IMR-90 (cell line): ENCODE measurements at regions of chr9 and their contacts with region 1.

Region 1: DNA sequence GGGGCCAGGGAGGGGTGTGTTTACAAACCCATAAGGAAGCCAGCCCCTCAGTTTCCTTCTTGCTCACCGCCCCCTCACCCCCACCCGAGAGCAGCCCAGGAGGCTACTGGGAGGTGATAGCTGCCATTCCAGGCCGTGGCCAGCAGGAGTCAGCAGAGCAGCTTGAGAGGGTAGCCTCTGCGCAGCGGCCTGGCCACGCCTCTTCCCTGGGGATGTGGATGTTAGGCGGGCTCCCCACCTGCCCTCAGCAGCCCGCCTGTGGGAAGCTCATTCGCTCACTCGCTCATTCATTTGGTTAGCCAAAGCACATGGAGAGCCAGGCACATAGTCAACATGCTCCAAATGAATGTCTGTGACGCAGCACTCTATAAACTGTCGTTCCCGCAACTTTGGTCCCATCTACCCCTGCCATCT is 6.1 kb upstream of the DPM2 start:
- DNase-seq: peak; percentile 73
- ATAC-seq: peak; percentile 95
- H3K4me3 ChIP-seq: no peak overlapping the region
- H3K27ac ChIP-seq: no peak overlapping the region
- H3K4me1 ChIP-seq: peaks cover 5% of the 10 kb centered on the region; the same call in 1 of the 2 replicates
- H3K27me3 ChIP-seq: no peaks in the 10 kb centered on the region
- CTCF ChIP-seq: peak; percentile 94
- POLR2A ChIP-seq: peak; percentile 55; the same call in 1 of the 2 replicates
- RAD21 ChIP-seq: peak; percentile 95

Region 2: DNA sequence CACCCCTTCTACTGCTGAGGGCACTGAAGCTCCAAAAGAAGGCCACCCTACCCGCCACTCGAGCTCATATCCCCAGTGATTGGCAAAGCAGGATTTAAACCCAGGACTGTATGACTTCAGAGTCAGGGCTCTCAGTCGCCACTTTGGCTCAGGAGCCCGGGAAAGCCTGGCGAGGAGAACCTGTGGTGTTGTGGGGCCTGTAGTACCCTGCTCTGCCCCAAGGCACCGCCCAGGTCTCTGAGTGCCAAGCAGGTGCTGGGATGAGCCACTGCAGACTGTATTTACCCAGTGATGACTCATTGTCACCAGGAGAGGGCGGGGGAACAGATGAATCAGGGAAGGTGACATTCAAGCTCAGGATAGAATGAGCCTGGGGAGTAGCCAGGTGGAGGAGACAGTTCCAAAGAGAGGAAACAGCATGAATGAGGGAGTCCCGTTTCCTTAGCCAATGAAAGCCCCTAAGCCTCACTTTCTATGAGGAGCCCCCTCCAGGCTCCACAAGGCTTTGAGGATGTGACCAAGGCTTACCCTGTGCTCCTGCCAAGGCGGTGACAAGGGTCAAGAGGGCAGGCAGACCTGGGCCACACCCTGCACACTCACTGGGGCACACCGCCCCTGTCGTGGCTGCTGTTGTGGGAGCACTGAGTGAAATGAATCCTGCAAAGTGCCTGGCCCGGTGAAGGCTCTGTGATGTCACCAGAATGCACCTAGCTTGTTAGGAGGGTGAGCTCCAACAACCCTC is 11.7 kb after region 1 on chr9:
- CTCF ChIA-PET with region 1: interaction called, 10 read pairs
- POLR2A ChIA-PET with region 1: no interaction called
- dilution Hi-C with region 1: no loop called
- in situ Hi-C with region 1: no loop called
- intact Hi-C with region 1: no loop called
- DNase-seq: peak; percentile 43
- ATAC-seq: peak; percentile 42
- H3K4me3 ChIP-seq: no peak overlapping the region
- H3K27ac ChIP-seq: no peak overlapping the region
- H3K4me1 ChIP-seq: peaks cover 5% of the 10 kb centered on the region
- H3K27me3 ChIP-seq: no peaks in the 10 kb centered on the region
- CTCF ChIP-seq: no peak
- POLR2A ChIP-seq: no peak
- RAD21 ChIP-seq: no peak

Region 3: GRCh38 chr9:127979333-127980110 is 35.8 kb after region 1 on chr9:
- CTCF ChIA-PET with region 1: interaction called, 8 read pairs
- POLR2A ChIA-PET with region 1: no interaction called
- dilution Hi-C with region 1: no loop called
- in situ Hi-C with region 1: no loop called
- intact Hi-C with region 1: loop called (anchors 1 kb)
- DNase-seq: peak; percentile 29
- ATAC-seq: peak; percentile 2; the same call in 1 of the 2 replicates
- H3K4me3 ChIP-seq: peak overlapping the region; percentile 61
- H3K27ac ChIP-seq: peak overlapping the region; percentile 62
- H3K4me1 ChIP-seq: peaks cover 33% of the 10 kb centered on the region
- H3K27me3 ChIP-seq: no peaks in the 10 kb centered on the region
- CTCF ChIP-seq: no peak
- POLR2A ChIP-seq: no peak
- RAD21 ChIP-seq: no peak

Region 4: GRCh38 chr9:128034821-128035764 is 91.4 kb after region 1 on chr9:
- CTCF ChIA-PET with region 1: interaction called, 15 read pairs
- POLR2A ChIA-PET with region 1: no interaction called
- dilution Hi-C with region 1: no loop called
- in situ Hi-C with region 1: no loop called
- intact Hi-C with region 1: loop called (anchors 1 kb)
- DNase-seq: peak; percentile 71
- ATAC-seq: peak; percentile 94
- H3K4me3 ChIP-seq: no peak overlapping the region
- H3K27ac ChIP-seq: no peak overlapping the region
- H3K4me1 ChIP-seq: no peaks in the 10 kb centered on the region
- H3K27me3 ChIP-seq: peaks cover 2% of the 10 kb centered on the region
- CTCF ChIP-seq: peak; percentile 86
- POLR2A ChIP-seq: no peak
- RAD21 ChIP-seq: peak; percentile 92

Region 5: GRCh38 chr9:128081056-128081455 is 137.3 kb after region 1 on chr9:
- CTCF ChIA-PET with region 1: interaction called, 3 read pairs
- POLR2A ChIA-PET with region 1: no interaction called
- dilution Hi-C with region 1: no loop called
- in situ Hi-C with region 1: no loop called
- intact Hi-C with region 1: loop called (anchors 1 kb)
- DNase-seq: peak; percentile 98
- ATAC-seq: peak; percentile 96
- H3K4me3 ChIP-seq: no peak overlapping the region
- H3K27ac ChIP-seq: peak overlapping the region; percentile 92; the same call in 1 of the 2 replicates
- H3K4me1 ChIP-seq: peaks cover 32% of the 10 kb centered on the region
- H3K27me3 ChIP-seq: no peaks in the 10 kb centered on the region
- CTCF ChIP-seq: no peak
- POLR2A ChIP-seq: no peak
- RAD21 ChIP-seq: no peak

Region 6: DNA sequence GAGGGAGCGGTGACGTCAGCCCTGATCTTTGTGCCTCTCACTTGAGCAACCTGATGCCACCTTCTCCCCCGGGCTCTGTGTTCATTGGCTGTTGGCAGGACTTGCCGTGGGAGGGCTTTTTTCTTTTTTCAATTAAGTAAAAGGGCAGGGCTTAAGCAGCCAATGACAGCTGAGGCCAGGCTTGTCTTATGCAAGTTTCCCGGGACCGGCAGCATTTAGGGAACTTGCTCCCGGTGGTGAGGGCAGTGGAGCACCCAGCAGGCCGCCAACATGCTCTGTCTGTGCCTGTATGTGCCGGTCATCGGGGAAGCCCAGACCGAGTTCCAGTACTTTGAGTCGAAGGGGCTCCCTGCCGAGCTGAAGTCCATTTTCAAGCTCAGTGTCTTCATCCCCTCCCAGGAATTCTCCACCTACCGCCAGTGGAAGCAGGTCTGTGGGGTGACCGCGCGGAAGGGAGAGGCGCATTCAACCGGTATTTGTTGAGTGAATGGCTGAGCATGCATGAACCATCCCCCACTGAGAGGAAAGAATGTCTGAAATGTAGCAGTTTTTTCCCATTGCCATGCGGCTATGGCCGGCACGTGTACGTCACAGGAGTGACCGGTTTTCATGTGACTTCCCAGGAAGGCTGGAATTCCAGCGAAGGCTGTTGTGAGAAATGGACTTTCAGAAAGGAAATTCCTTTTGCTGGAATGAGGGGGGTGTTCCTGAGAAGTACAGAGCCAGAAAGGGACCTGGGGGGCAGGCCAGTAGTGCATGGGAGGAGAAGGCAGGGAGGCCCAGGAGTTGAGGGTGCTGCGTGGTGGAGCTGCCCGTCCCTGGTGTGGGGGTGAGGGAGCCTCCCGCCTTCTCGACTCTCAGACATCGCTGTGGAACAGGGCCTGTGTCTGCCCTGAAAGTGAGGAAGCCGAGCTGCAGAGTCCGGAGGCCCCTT is 154.8 kb after region 1 on chr9:
- CTCF ChIA-PET with region 1: interaction called, 4 read pairs
- POLR2A ChIA-PET with region 1: no interaction called
- dilution Hi-C with region 1: no loop called
- in situ Hi-C with region 1: loop called (anchors 5 kb)
- intact Hi-C with region 1: loop called (anchors 5 kb)
- DNase-seq: peak; percentile 98
- ATAC-seq: peak; percentile 75
- H3K4me3 ChIP-seq: peak overlapping the region; percentile 47
- H3K27ac ChIP-seq: peak overlapping the region; percentile 86
- H3K4me1 ChIP-seq: peaks cover 32% of the 10 kb centered on the region
- H3K27me3 ChIP-seq: no peaks in the 10 kb centered on the region
- CTCF ChIP-seq: no peak
- POLR2A ChIP-seq: peak; percentile 99
- RAD21 ChIP-seq: 0 out of 2 replicates have a peak, but pooled peaks have one; percentile 1

Region 7: DNA sequence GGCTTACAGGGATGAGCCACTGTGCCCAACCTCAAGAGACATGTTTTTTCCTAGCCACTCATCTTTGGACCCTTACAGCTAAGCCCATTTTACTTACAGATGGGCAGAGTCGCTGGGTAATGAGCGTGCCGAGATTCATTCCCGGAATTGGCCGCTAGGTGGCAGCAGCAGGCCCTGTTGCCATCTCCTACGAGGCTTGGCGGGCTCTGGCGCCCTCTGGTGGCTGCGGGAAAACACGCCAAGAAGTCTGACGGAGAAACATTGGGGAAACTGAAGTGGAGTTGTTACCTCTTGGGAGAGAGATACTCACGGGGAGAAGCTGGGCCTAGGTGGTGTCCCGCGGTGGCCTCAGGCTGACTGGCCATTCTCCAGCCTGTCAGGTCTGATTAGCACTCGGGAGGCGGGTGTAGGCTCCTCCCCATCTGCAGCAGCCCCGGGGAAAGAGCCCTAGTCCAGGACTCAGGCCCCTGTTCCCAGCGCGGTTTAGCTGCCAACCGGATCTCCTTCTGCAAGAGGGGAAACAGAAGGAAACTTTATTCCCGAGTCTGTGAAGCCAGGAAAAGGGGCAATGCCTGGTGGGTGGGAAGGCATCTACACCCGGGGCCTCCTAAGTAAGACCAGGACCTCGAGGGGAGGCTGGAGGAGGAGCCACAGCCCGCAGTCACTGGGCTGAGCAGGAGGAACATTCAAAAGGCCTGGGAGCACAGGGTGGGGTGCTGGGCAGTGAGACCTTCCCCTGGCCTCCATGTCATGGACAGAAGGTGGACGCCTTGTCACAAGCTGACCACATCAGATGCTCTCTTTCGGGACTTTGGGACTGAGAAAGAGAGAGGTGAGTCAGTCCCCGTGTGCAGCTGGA is 174.1 kb after region 1 on chr9:
- CTCF ChIA-PET with region 1: interaction called, 6 read pairs
- POLR2A ChIA-PET with region 1: no interaction called
- dilution Hi-C with region 1: no loop called
- in situ Hi-C with region 1: no loop called
- intact Hi-C with region 1: loop called (anchors 1 kb)
- DNase-seq: peak; percentile 80
- ATAC-seq: peak; percentile 89
- H3K4me3 ChIP-seq: no peak overlapping the region
- H3K27ac ChIP-seq: no peak overlapping the region
- H3K4me1 ChIP-seq: no peaks in the 10 kb centered on the region
- H3K27me3 ChIP-seq: no peaks in the 10 kb centered on the region
- CTCF ChIP-seq: peak; percentile 100; the same call in 1 of the 2 replicates
- POLR2A ChIP-seq: peak; percentile 50; the same call in 1 of the 2 replicates
- RAD21 ChIP-seq: peak; percentile 98

Region 8: DNA sequence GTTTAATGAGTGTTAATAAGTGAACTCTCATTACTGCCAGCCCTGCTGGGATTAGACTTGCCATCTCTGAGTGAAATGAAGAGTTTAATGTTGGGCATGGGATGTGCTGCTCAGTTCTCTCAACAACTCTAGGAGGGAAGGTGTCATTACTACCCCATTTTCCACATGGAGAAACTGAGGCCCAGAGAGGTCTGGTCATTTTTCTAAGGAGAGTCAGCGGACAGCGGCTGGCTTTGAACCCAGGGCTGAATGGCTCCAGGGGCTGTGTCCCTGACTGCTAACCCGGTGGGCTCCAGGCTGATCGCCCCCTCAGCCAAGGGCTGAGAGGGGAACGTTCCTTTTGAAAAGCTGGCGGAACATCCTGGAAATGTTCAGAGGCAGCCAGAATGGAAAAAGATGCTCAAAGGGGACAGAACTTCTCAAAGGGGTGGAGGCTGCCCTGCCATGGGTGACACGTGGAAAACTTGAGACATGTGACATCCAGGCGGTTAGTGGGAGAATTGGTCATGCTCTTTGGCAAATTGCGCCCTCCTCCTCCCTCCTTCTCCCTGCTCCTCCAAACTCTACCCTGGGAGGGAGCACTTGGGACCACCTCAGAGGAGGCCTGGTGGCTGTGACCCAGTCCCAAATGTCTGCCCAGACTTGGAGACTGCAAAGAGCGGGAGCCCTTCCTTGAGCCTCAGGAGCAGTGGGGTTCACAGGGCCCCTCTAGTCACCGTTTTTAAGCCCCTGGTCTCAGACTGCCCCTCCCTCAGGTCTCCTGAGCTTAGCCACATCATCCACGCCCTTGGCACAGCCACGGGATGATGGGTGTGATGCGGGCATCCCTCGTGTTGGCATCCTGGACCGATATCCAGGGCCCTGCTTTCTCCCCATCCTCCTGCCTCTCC is 288.1 kb after region 1 on chr9:
- CTCF ChIA-PET with region 1: no interaction called
- POLR2A ChIA-PET with region 1: no interaction called
- dilution Hi-C with region 1: no loop called
- in situ Hi-C with region 1: no loop called
- intact Hi-C with region 1: no loop called
- DNase-seq: no peak
- ATAC-seq: no peak
- H3K4me3 ChIP-seq: no peak overlapping the region
- H3K27ac ChIP-seq: no peak overlapping the region
- H3K4me1 ChIP-seq: no peaks in the 10 kb centered on the region
- H3K27me3 ChIP-seq: no peaks in the 10 kb centered on the region
- CTCF ChIP-seq: no peak
- POLR2A ChIP-seq: no peak
- RAD21 ChIP-seq: no peak